ENCODE measurements at regions of chr1 and their contacts with region 1.

Region 1: GRCh38 chr1:70487910-70488665 is 77.0 kb downstream of the CTH start:
- DNase-seq: peak; percentile 63
- H3K4me3 Mint-ChIP-seq: no peak overlapping the region
- H3K27ac Mint-ChIP-seq: no peak overlapping the region
- H3K4me1 Mint-ChIP-seq: peaks cover 8% of the 10 kb centered on the region
- H3K27me3 Mint-ChIP-seq: peaks cover 17% of the 10 kb centered on the region
- CTCF ChIP-seq: peak; percentile 57

Region 2: GRCh38 chr1:70034403-70034802 is 453.7 kb before region 1 on chr1:
- CTCF ChIA-PET with region 1: interaction called, 3 read pairs
- POLR2A ChIA-PET with region 1: no interaction called
- intact Hi-C with region 1: loop called (anchors 5 kb)
- DNase-seq: peak; percentile 52
- H3K4me3 Mint-ChIP-seq: no peak overlapping the region
- H3K27ac Mint-ChIP-seq: no peak overlapping the region
- H3K4me1 Mint-ChIP-seq: peaks cover 8% of the 10 kb centered on the region
- H3K27me3 Mint-ChIP-seq: peaks cover 67% of the 10 kb centered on the region
- CTCF ChIP-seq: peak; percentile 40